MCF 10A (cell line): ENCODE measurements at regions of chr6 and their contacts with region 1.

Region 1: GRCh38 chr6:34696739-34697543 is at the start of gene ILRUN:
- DNase-seq: peak; percentile 93
- H3K4me3 Mint-ChIP-seq: peak within 1 kb of the TSS; percentile 81
- H3K27ac Mint-ChIP-seq: peak within 1 kb of the TSS; percentile 32
- H3K4me1 Mint-ChIP-seq: peaks cover 10% of the 10 kb centered on the region
- H3K27me3 Mint-ChIP-seq: no peaks in the 10 kb centered on the region
- CTCF ChIP-seq: no peak
- total RNA-seq, gene ILRUN: 49.2 and 50.8 TPM in 2 replicates

Region 2: GRCh38 chr6:34674268-34674639 is 22.7 kb before region 1 on chr6:
- CTCF ChIA-PET with region 1: no interaction called
- POLR2A ChIA-PET with region 1: interaction called, 10 read pairs
- intact Hi-C with region 1: no loop called
- DNase-seq: no peak
- H3K4me3 Mint-ChIP-seq: no peak overlapping the region
- H3K27ac Mint-ChIP-seq: no peak overlapping the region
- H3K4me1 Mint-ChIP-seq: peaks cover 27% of the 10 kb centered on the region
- H3K27me3 Mint-ChIP-seq: no peaks in the 10 kb centered on the region
- CTCF ChIP-seq: no peak

Region 3: GRCh38 chr6:34709386-34709785 is 12.4 kb after region 1 on chr6:
- CTCF ChIA-PET with region 1: no interaction called
- POLR2A ChIA-PET with region 1: interaction called, 28 read pairs
- intact Hi-C with region 1: no loop called
- DNase-seq: peak; percentile 51
- H3K4me3 Mint-ChIP-seq: no peak overlapping the region
- H3K27ac Mint-ChIP-seq: peak overlapping the region; percentile 46
- H3K4me1 Mint-ChIP-seq: peaks cover 15% of the 10 kb centered on the region
- H3K27me3 Mint-ChIP-seq: no peaks in the 10 kb centered on the region
- CTCF ChIP-seq: no peak

Region 4: DNA sequence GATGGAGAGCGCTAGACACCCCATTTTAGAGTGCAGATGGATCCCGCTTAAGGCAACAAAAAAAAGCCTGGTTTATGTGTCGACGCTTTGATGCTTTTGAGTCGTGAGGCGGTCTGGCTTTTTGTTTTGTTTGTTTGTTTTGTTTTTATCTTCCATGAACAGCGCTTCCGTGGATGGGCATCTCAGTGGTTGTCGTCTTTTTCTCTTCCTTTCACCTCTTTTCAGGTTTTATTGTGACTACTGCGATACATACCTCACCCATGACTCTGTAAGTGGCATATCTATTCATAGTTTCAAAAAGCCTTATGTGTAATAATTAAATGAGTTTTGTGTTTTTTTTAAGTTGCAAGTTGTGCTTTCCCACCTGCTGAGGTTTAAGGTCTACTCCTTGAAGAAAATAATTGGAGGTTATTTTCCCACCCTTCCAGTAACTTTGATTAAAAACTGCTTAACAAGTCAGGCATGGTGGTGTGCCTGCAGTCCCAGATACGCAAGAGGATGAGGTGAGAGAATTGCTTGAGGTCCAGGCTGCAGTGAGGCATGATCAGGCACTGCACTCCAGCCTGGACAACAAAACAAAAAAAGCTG is 60.8 kb after region 1 on chr6:
- CTCF ChIA-PET with region 1: interaction called, 3 read pairs
- POLR2A ChIA-PET with region 1: interaction called, 29 read pairs
- intact Hi-C with region 1: loop called (anchors 2 kb)
- DNase-seq: no peak
- H3K4me3 Mint-ChIP-seq: no peak overlapping the region
- H3K27ac Mint-ChIP-seq: no peak overlapping the region
- H3K4me1 Mint-ChIP-seq: peaks cover 6% of the 10 kb centered on the region
- H3K27me3 Mint-ChIP-seq: no peaks in the 10 kb centered on the region
- CTCF ChIP-seq: no peak